Caco-2 (cell line): ENCODE measurements at regions of chr6 and their contacts with region 1.

Region 1: GRCh38 chr6:108732136-108732885 is 115.9 kb upstream of the ARMC2 start:
- DNase-seq: peak; percentile 45 to 81
- H3K4me3 ChIP-seq: no peak overlapping the region
- H3K4me3 Mint-ChIP-seq: no peak overlapping the region
- H3K27ac Mint-ChIP-seq: peak overlapping the region; percentile 55
- H3K4me1 ChIP-seq: peaks cover 69% of the 10 kb centered on the region
- H3K4me1 Mint-ChIP-seq: peaks cover 54% of the 10 kb centered on the region
- H3K27me3 ChIP-seq: no peaks in the 10 kb centered on the region
- H3K27me3 Mint-ChIP-seq: no peaks in the 10 kb centered on the region
- CTCF ChIP-seq: no peak

Region 2: GRCh38 chr6:108541838-108542759 is 190.2 kb before region 1 on chr6:
- CTCF ChIA-PET with region 1: no interaction called
- POLR2A ChIA-PET with region 1: no interaction called
- intact Hi-C with region 1: loop called (anchors 1 kb)
- DNase-seq: peak; percentile 67 to 74
- H3K4me3 ChIP-seq: peak overlapping the region; percentile 1; the same call in 1 of the 2 replicates
- H3K4me3 Mint-ChIP-seq: peak overlapping the region; percentile 55
- H3K27ac Mint-ChIP-seq: no peak overlapping the region
- H3K4me1 ChIP-seq: no peaks in the 10 kb centered on the region
- H3K4me1 Mint-ChIP-seq: no peaks in the 10 kb centered on the region
- H3K27me3 ChIP-seq: no peaks in the 10 kb centered on the region
- H3K27me3 Mint-ChIP-seq: no peaks in the 10 kb centered on the region
- CTCF ChIP-seq: peak; percentile 76 to 85

Region 3: DNA sequence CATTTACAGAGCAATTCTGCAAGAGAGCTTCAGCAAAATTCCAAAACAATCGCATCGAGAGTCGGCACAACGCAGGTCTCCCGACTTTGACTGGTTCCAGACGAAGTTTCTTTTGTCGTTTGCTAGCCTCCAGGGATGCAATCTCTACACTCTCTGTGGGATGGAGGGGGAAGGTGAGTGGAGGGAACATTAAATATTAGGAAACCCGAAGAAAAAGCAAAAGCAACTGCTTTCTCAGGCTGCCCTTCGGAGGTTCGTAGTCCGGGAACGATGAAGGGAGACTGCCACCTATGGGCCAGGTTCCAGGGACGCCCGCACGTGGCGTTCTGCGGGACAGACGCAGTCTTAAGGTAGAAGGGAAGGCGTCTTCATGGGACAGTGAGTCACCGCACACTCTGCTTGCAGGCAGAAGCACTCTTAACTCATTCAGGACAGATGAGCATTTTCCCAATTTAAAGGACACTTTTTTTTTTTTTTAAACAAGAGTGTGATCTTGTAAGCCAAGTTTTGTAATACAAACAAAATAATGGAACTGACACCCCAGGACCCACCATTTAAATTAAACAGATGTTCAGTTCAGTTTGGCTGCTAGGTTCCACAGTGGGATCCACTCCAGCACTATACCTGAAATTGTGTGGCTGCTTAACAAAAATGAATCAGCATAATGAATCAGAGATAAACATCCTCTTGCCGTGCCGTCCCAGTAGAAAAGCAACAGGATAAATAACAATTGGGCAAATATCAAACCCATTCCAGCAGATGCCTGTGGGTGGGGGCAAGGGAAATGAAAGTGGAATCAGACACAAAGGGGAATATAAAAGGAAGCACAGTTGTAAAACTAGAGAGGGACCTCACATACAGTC is 50.1 kb after region 1 on chr6:
- CTCF ChIA-PET with region 1: no interaction called
- POLR2A ChIA-PET with region 1: no interaction called
- intact Hi-C with region 1: loop called (anchors 1 kb)
- DNase-seq: peak; percentile 84 to 86
- H3K4me3 ChIP-seq: peak overlapping the region; percentile 30
- H3K4me3 Mint-ChIP-seq: peak overlapping the region; percentile 69
- H3K27ac Mint-ChIP-seq: no peak overlapping the region
- H3K4me1 ChIP-seq: 0 out of 2 replicates have a peak, but pooled peaks cover 7% of the 10 kb centered on the region
- H3K4me1 Mint-ChIP-seq: peaks cover 21% of the 10 kb centered on the region
- H3K27me3 ChIP-seq: no peaks in the 10 kb centered on the region
- H3K27me3 Mint-ChIP-seq: no peaks in the 10 kb centered on the region
- CTCF ChIP-seq: peak; percentile 72 to 92